ENCODE measurements at regions of chr15 and their contacts with region 1.

Region 1: DNA sequence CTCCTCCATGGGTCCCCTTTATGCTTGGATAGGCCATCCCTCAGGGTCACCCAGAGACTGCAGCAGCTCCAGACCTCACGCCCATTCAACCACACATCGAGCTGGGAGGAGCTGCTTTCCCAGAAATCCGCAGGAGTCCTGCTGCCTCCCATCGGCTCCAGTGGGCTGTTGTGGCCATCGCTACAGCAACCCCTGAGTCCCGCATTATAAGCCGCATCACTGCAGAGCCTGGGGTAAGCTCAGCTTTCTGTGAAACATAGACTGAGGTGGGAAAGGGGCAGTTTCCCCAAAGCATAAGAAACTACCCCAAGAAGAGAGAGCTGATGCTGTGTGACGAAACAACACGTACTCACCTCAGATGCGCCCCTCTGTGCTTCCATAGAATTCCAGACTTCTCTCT is 35.7 kb downstream of the MRPL46 start:
- DNase-seq: no peak

Region 2: DNA sequence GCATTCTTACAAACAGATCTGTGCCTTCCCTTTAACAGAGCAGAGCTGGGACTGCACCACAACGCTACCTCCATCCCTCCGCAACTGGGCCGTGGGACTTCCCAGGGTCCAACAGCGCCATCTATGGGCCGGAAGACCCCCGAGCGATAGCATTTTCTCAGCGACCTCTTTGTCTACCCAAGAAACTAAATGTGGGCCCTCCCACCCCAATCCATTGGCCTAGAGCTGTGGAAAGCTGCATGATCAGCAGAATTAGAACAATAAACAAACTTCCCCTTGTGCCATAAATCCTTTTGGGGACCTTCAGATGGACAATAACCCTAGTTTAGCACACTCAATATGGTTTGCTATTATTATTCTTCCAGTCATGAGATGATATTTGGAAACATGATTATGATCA is 100.2 kb before region 1 on chr15:
- in situ Hi-C with region 1: no loop called
- DNase-seq: no peak

Region 3: GRCh38 chr15:88393719-88394519 is 37.5 kb before region 1 on chr15:
- in situ Hi-C with region 1: loop called (anchors 5 kb)
- DNase-seq: no peak